Esophagus muscularis mucosa (tissue), 4 donors: ENCODE measurements at regions of chr20 and their contacts with region 1.

Region 1: GRCh38 chr20:45934586-45935415 is at the start of gene PCIF1:
- DNase-seq: peak; percentile 100
- H3K4me3 ChIP-seq: peak within 1 kb of the TSS; percentile 92 to 100 (median 100)
- H3K27ac ChIP-seq: peak within 1 kb of the TSS; percentile 100
- H3K4me1 ChIP-seq: peaks cover 20 to 45% (median 30%) of the 10 kb centered on the region in 4 donors
- H3K27me3 ChIP-seq: no peaks in the 10 kb centered on the region
- CTCF ChIP-seq: no peak
- EP300 ChIP-seq: no peak
- POLR2A ChIP-seq: peak; percentile 85
- total RNA-seq, gene PCIF1: 35.3 to 51.2 (median 37.2) TPM

Region 2: GRCh38 chr20:45890985-45891983 is 43.5 kb before region 1 on chr20 and contains the starts of genes CTSA and NEURL2:
- intact Hi-C with region 1: loop called (anchors 2 kb)
- DNase-seq: peak; percentile 98
- H3K4me3 ChIP-seq: peak within 1 kb of the TSS; percentile 70 to 93 (median 88)
- H3K27ac ChIP-seq: peak within 1 kb of the TSS; percentile 84 to 94 (median 90)
- H3K4me1 ChIP-seq: peaks cover 24 to 48% (median 34%) of the 10 kb centered on the region in 4 donors
- H3K27me3 ChIP-seq: no peaks in the 10 kb centered on the region
- CTCF ChIP-seq: peak in 2 of 3 experiments; percentile 18 to 32
- EP300 ChIP-seq: no peak
- POLR2A ChIP-seq: peak; percentile 69
- total RNA-seq, gene CTSA: 44.8 to 70.2 (median 48.3) TPM
- total RNA-seq, gene NEURL2: 10.8 to 16.1 (median 13.0) TPM